Stomach (tissue), 19 donors: ENCODE measurements at regions of chr10 and their contacts with region 1.

Region 1: GRCh38 chr10:75099952-75100763 is 11.3 kb upstream of the SAMD8 start:
- DNase-seq: peak; percentile 87 to 91
- H3K4me3 ChIP-seq: no peak overlapping the region
- H3K27ac ChIP-seq: no peak overlapping the region
- H3K4me1 ChIP-seq: peaks cover 6 to 17% (median 13%) of the 10 kb centered on the region in 4 donors
- H3K27me3 ChIP-seq: no peaks in the 10 kb centered on the region
- CTCF ChIP-seq: peak in 6 of 7 experiments; percentile 90 to 99 (median 98)
- EP300 ChIP-seq: no peak
- POLR2A ChIP-seq: no peak

Region 2: DNA sequence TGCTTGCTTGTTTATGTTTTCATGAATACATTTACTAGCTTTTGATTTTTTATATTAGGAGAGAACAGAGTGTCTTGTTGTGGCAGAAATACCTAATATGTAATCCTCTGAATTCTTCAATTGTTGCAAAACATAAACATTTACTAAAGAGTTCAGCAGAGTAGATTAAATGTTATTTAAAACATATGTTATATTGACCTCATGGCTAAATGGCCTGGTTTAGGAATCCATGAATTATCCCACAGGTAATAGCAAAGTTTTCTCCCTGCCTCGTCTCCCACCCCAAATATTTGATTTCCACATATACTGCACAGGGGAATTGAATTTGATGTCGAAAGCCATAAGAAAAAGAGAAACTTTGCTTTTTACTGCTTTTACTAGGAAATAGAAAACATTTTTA is 837.3 kb before region 1 on chr10:
- intact Hi-C with region 1: loop called (anchors 5 kb)
- DNase-seq: no peak
- H3K4me3 ChIP-seq: no peak overlapping the region
- H3K27ac ChIP-seq: no peak overlapping the region
- H3K4me1 ChIP-seq: peaks cover 0 to 11% (median 0%) of the 10 kb centered on the region in 4 donors
- H3K27me3 ChIP-seq: no peaks in the 10 kb centered on the region
- CTCF ChIP-seq: no peak
- EP300 ChIP-seq: no peak
- POLR2A ChIP-seq: no peak

Region 3: DNA sequence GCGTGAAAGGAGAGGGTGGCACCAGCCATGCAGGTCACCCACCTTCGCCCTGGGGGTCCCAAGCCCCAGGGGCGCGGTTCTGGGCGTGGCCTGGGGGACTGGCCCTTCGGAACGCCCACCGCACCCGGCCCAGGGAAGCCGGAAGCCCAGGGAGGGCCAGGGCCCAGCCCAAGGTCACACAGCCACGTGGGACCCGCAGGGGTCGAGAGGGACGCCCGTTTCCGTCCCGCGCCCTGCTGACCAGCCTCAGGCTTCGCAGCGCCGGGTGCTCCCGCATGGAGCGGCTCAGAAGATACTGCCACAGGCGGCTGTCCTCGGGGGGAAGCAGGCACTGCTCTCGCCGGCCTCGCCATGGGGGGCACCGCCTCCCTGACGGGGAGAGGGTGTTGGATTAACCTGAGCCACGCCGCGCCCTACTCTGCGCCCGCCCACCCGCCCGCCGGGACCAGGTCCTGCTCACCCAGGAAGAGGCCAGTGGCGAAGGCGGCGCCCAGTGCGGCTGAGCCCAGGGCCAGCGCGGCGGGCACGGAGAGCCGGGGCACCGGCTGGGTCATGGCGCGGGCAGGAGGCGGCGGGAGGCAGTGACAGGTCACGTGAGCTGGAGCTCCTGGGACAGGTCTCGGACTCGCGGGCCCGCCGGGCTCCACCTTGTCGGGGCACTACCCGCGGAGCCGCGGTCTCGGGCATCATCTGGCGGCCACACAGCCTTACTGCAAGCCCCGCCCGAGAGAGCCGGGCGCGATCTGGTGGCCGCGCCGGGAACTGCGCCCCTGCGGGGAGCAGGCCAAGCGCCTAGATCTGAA is 135.4 kb after region 1 on chr10 and contains the start of gene COMTD1:
- intact Hi-C with region 1: loop called (anchors 10 kb)
- DNase-seq: peak; percentile 97 to 98
- H3K4me3 ChIP-seq: peak within 1 kb of the TSS; percentile 76 to 83 (median 78)
- H3K27ac ChIP-seq: peak within 1 kb of the TSS; percentile 86 to 97 (median 90)
- H3K4me1 ChIP-seq: peaks cover 18 to 30% (median 26%) of the 10 kb centered on the region in 4 donors
- H3K27me3 ChIP-seq: no peaks in the 10 kb centered on the region
- CTCF ChIP-seq: peak in 6 of 7 experiments; percentile 96 to 100 (median 100)
- EP300 ChIP-seq: no peak
- POLR2A ChIP-seq: no peak
- total RNA-seq, gene COMTD1: 15.4 to 446 (median 71.4) TPM